WTC11 (cell line): ENCODE measurements at regions of chr5 and their contacts with region 1.

Region 1: GRCh38 chr5:142012792-142013388 is at the start of gene GNPDA1:
- DNase-seq: peak; percentile 52
- ATAC-seq: peak; percentile 57
- H3K4me3 Mint-ChIP-seq: peak within 1 kb of the TSS; percentile 81
- H3K27ac Mint-ChIP-seq: peak within 1 kb of the TSS; percentile 86
- H3K4me1 Mint-ChIP-seq: peaks cover 9% of the 10 kb centered on the region
- H3K27me3 Mint-ChIP-seq: peaks cover 2% of the 10 kb centered on the region; the same call in 1 of the 2 replicates
- CTCF ChIP-seq: no peak
- total RNA-seq, gene GNPDA1: 54.8 to 67.3 TPM (median 62.9 TPM) in 3 replicates

Region 2: DNA sequence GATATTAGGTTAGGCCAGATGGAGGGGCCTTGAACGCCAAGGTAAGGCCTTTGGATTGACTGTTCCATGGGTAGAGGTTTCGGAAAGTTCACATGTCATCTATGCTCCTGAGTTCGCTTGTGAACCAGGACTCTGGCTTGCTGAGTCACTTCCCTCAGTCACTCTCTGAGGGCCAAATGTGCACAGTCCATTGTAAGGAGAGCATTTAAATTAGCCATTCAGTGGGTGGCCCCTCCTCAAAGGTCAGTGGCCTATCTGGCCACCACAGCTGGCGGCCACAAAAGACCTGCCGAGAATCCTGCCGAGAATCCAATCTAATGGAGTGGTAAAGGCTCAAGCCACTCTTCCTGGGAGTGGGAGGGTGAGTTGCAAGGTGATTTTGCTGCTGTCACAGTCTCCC is 272.0 kb before region 1 on chr5:
- CTCF ChIA-PET with region 1: no interaction called
- POLR2A ChIA-PET with region 1: no interaction called
- DNase-seq: no peak
- ATAC-seq: no peak
- H3K4me3 Mint-ChIP-seq: no peak overlapping the region
- H3K27ac Mint-ChIP-seq: no peak overlapping the region
- H3K4me1 Mint-ChIP-seq: peaks cover 31% of the 10 kb centered on the region
- H3K27me3 Mint-ChIP-seq: no peaks in the 10 kb centered on the region; the same call in 1 of the 2 replicates
- CTCF ChIP-seq: no peak

Region 3: DNA sequence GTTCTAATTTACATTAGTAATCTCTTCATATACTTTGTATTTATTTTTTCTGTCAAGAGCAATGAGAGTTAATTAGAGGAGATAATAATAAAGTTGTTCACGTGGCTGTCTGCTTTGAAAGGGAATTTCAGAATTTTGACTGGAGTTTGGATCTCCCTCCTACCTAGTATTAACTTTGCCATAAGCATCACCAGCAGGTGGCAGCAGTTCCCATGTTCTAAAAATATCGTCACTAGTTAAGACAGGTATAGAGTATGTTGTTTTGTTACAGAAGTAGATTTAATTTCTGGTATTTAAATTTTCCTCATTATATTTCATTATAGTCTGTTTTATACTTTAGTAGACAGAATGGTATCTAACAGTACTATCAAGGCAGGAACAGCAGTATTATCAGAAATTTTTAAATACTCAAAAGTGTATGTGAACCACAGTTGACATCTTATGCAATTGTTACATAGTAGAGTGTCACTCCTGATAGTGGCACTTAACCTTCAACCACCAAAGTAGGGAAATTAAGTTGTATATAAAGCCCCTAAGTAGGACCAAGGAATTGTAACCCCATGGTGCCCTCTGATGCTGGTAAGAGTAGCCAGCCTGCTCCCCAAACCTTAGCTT is 20.4 kb before region 1 on chr5:
- CTCF ChIA-PET with region 1: interaction called, 20 read pairs
- POLR2A ChIA-PET with region 1: no interaction called
- DNase-seq: peak; percentile 78
- ATAC-seq: peak; percentile 50
- H3K4me3 Mint-ChIP-seq: no peak overlapping the region
- H3K27ac Mint-ChIP-seq: no peak overlapping the region
- H3K4me1 Mint-ChIP-seq: no peaks in the 10 kb centered on the region
- H3K27me3 Mint-ChIP-seq: no peaks in the 10 kb centered on the region
- CTCF ChIP-seq: peak; percentile 62

Region 4: DNA sequence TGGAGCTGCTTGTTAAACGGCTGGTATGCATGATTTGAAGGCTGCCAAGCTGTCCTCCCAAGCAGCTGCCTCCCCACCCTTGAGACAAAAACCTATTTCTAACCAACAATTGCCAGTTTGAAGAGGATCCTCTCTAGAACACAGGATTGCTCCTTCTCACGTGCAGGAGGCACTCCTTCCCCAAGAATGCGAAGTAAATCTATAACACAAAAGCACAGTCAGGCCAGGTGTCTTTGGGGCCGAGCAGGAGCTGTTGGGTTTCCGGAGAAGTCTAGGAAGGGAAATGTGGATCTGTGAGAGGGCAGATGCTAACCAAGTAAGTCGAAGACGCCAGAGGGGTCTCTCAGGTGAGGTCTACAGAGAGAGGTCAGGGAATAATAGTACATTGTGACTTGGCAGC is 35.4 kb after region 1 on chr5:
- CTCF ChIA-PET with region 1: interaction called, 17 read pairs
- POLR2A ChIA-PET with region 1: interaction called, 3 read pairs
- DNase-seq: peak; percentile 36
- ATAC-seq: peak; percentile 85
- H3K4me3 Mint-ChIP-seq: no peak overlapping the region
- H3K27ac Mint-ChIP-seq: peak overlapping the region; percentile 58
- H3K4me1 Mint-ChIP-seq: peaks cover 18% of the 10 kb centered on the region
- H3K27me3 Mint-ChIP-seq: 0 out of 2 replicates have a peak, but pooled peaks cover 4% of the 10 kb centered on the region
- CTCF ChIP-seq: no peak

Region 5: GRCh38 chr5:142108432-142109330 is 95.8 kb after region 1 on chr5 and contains the start of gene NDFIP1:
- CTCF ChIA-PET with region 1: interaction called, 13 read pairs
- POLR2A ChIA-PET with region 1: no interaction called
- DNase-seq: peak; percentile 84
- ATAC-seq: peak; percentile 97
- H3K4me3 Mint-ChIP-seq: peak within 1 kb of the TSS; percentile 81
- H3K27ac Mint-ChIP-seq: peak within 1 kb of the TSS; percentile 69
- H3K4me1 Mint-ChIP-seq: peaks cover 24% of the 10 kb centered on the region
- H3K27me3 Mint-ChIP-seq: peaks cover 15% of the 10 kb centered on the region
- CTCF ChIP-seq: no peak
- total RNA-seq, gene NDFIP1: 26.4 to 27.6 TPM (median 26.6 TPM) in 3 replicates